SK-N-SH (cell line): ENCODE measurements at regions of chr19 and their contacts with region 1.

Region 1: GRCh38 chr19:48492925-48493717 is 18.5 kb downstream of the LMTK3 start:
- DNase-seq: peak; percentile 99
- H3K4me3 ChIP-seq: peak overlapping the region; percentile 58 to 61
- H3K27ac ChIP-seq: peak overlapping the region; percentile 68 to 78
- H3K4me1 ChIP-seq: peaks cover 13 to 14% of the 10 kb centered on the region in 2 experiments; a peak in 3 of 4 replicates
- H3K27me3 ChIP-seq: no peaks in the 10 kb centered on the region
- CTCF ChIP-seq: no peak
- EP300 ChIP-seq: no peak
- RAD21 ChIP-seq: no peak

Region 2: DNA sequence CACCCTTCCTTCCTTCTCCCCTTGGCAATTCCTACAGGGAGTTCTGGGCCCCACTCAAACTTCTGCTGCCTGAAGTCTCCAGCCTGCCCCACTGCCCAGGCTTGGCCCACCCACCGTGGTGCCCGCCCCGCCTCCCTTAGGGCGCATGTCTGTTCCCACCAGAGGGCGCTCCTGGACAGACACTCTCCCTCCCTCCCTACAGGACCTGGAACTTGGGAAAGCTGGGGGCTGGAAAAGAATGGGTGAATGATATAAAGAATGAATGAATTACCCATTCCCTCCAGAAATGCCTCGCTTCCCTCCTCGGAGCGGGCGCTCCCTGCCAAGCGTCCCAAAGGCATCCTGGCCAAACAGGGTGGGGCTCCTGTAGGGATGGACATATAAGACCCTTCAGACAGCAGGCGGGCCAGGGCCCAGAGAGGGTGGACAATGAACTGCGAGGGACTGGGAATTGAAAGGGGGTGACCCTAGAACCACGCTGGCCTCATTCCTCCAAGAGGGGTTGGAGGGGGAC is 173.0 kb before region 1 on chr19:
- CTCF ChIA-PET with region 1: interaction called, 10 read pairs
- POLR2A ChIA-PET with region 1: no interaction called
- DNase-seq: peak; percentile 67
- H3K4me3 ChIP-seq: no peak overlapping the region; a peak in 1 of 4 replicates
- H3K27ac ChIP-seq: no peak overlapping the region
- H3K4me1 ChIP-seq: peaks cover 12 to 24% of the 10 kb centered on the region in 2 experiments
- H3K27me3 ChIP-seq: no peaks in the 10 kb centered on the region
- CTCF ChIP-seq: peak; percentile 73
- EP300 ChIP-seq: no peak
- RAD21 ChIP-seq: peak; percentile 59

Region 3: GRCh38 chr19:48473161-48473966 is 19.8 kb before region 1 on chr19:
- CTCF ChIA-PET with region 1: interaction called, 40 read pairs
- POLR2A ChIA-PET with region 1: no interaction called
- DNase-seq: no peak
- H3K4me3 ChIP-seq: no peak overlapping the region
- H3K27ac ChIP-seq: no peak overlapping the region
- H3K4me1 ChIP-seq: peaks cover under 1 to 9% of the 10 kb centered on the region in 2 experiments; a peak in 3 of 4 replicates
- H3K27me3 ChIP-seq: no peaks in the 10 kb centered on the region
- CTCF ChIP-seq: no peak
- EP300 ChIP-seq: no peak
- RAD21 ChIP-seq: no peak

Region 4: GRCh38 chr19:48480558-48481500 is 12.3 kb before region 1 on chr19:
- CTCF ChIA-PET with region 1: interaction called, 40 read pairs
- POLR2A ChIA-PET with region 1: interaction called, 6 read pairs
- DNase-seq: no peak
- H3K4me3 ChIP-seq: no peak overlapping the region
- H3K27ac ChIP-seq: no peak overlapping the region
- H3K4me1 ChIP-seq: peaks cover 7 to 11% of the 10 kb centered on the region in 2 experiments; a peak in 3 of 4 replicates
- H3K27me3 ChIP-seq: no peaks in the 10 kb centered on the region
- CTCF ChIP-seq: no peak
- EP300 ChIP-seq: no peak
- RAD21 ChIP-seq: no peak

Region 5: GRCh38 chr19:48510421-48511280 is 17.5 kb after region 1 on chr19:
- CTCF ChIA-PET with region 1: interaction called, 16 read pairs
- POLR2A ChIA-PET with region 1: interaction called, 3 read pairs
- DNase-seq: peak; percentile 80
- H3K4me3 ChIP-seq: peak overlapping the region; percentile 59 to 77
- H3K27ac ChIP-seq: peak overlapping the region in 1 of 2 experiments; percentile 44; a peak in 1 of 4 replicates
- H3K4me1 ChIP-seq: peaks cover 0 to 22% of the 10 kb centered on the region in 2 experiments; a peak in 1 of 4 replicates
- H3K27me3 ChIP-seq: no peaks in the 10 kb centered on the region
- CTCF ChIP-seq: no peak
- EP300 ChIP-seq: no peak
- RAD21 ChIP-seq: no peak

Region 6: DNA sequence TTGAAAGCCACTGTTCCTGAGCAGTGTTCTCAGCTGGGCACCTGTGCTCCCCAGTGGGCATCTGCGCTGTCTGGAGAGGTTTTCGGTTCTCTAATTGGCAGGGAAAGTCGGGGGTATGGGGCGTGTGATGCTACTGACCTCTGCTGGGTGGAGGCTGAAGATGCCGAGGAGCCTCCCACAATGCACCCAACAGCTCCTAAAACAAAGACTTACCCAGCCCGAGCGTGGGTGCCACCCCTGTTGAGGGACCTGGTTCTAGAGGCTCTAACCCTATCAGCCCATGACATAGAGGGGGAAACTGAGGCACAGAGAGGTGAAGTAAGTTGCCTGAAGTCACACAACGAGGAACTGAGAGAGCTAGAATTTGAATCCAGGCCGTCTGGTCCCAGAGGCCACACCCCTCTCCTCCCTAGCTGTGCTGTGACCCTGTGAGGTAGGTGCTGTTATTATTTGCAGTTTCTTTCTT is 115.7 kb after region 1 on chr19:
- CTCF ChIA-PET with region 1: interaction called, 17 read pairs
- POLR2A ChIA-PET with region 1: no interaction called
- DNase-seq: peak; percentile 86
- H3K4me3 ChIP-seq: no peak overlapping the region
- H3K27ac ChIP-seq: no peak overlapping the region
- H3K4me1 ChIP-seq: peaks cover 0 to 5% of the 10 kb centered on the region in 2 experiments; a peak in 1 of 4 replicates
- H3K27me3 ChIP-seq: no peaks in the 10 kb centered on the region
- CTCF ChIP-seq: peak; percentile 64
- EP300 ChIP-seq: no peak
- RAD21 ChIP-seq: peak; percentile 71